Endothelial cell of umbilical vein (primary cell): ENCODE measurements at regions of chr16 and their contacts with region 1.

Region 1: GRCh38 chr16:19179546-19180490 is 11.8 kb downstream of the SYT17 start:
- DNase-seq: peak; percentile 63
- H3K4me3 ChIP-seq: no peak overlapping the region
- H3K27ac ChIP-seq: no peak overlapping the region
- H3K4me1 ChIP-seq: peaks cover 2% of the 10 kb centered on the region
- H3K27me3 ChIP-seq: peaks cover 0 to 6% of the 10 kb centered on the region in 2 experiments
- CTCF ChIP-seq: peak; percentile 73 to 87
- POLR2A ChIP-seq: no peak

Region 2: DNA sequence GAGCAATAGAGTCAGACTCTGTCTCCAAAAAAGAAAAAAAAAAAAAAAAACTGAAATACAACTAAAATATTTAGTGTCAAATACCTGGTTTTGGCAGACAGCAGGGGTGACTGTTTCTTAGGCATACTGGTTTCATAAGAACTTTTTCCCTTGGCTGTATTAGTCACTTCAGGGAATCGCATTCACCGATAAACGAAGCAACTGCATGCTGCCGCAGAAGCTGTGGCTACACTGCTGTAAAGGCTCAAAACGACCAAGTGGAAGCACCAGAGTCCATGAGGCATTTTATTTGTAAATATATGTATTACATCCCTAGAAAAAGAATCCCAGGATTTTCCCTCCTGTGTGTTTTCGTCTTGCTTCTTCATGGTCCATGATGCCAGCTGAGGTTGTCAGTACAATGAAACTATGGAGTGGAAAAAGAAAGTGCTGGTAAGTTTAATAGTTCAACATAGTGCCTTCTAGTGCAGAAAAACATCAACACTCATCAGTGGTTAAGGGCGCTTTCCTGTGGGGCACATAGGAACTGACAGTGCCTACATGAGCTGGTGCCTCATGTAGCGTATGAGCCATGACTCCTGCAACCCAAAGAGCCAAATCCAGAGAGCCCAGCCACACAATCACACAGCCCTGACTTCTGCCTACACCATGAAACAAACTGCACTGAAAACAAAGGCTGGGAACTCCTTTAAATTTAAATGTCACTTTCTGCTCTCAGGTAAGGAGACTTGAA is 397.0 kb before region 1 on chr16:
- CTCF ChIA-PET with region 1: no interaction called
- POLR2A ChIA-PET with region 1: no interaction called
- dilution Hi-C with region 1: no loop called
- intact Hi-C with region 1: no loop called
- DNase-seq: no peak
- H3K4me3 ChIP-seq: no peak overlapping the region
- H3K27ac ChIP-seq: no peak overlapping the region
- H3K4me1 ChIP-seq: peaks cover 24% of the 10 kb centered on the region
- H3K27me3 ChIP-seq: no peaks in the 10 kb centered on the region
- CTCF ChIP-seq: no peak
- POLR2A ChIP-seq: no peak

Region 3: GRCh38 chr16:19086322-19087199 is 93.3 kb before region 1 on chr16:
- CTCF ChIA-PET with region 1: interaction called, 244 read pairs
- POLR2A ChIA-PET with region 1: no interaction called
- dilution Hi-C with region 1: no loop called
- intact Hi-C with region 1: loop called (anchors 1 kb)
- DNase-seq: peak; percentile 95
- H3K4me3 ChIP-seq: peak overlapping the region; percentile 34 to 69 (median 41)
- H3K27ac ChIP-seq: peak overlapping the region; percentile 61
- H3K4me1 ChIP-seq: peaks cover 15% of the 10 kb centered on the region
- H3K27me3 ChIP-seq: no peaks in the 10 kb centered on the region
- CTCF ChIP-seq: peak; percentile 99
- POLR2A ChIP-seq: peak; percentile 94

Region 4: GRCh38 chr16:19094541-19095365 is 85.1 kb before region 1 on chr16:
- CTCF ChIA-PET with region 1: interaction called, 24 read pairs
- POLR2A ChIA-PET with region 1: no interaction called
- dilution Hi-C with region 1: no loop called
- intact Hi-C with region 1: no loop called
- DNase-seq: no peak
- H3K4me3 ChIP-seq: no peak overlapping the region
- H3K27ac ChIP-seq: no peak overlapping the region
- H3K4me1 ChIP-seq: peaks cover 17% of the 10 kb centered on the region
- H3K27me3 ChIP-seq: no peaks in the 10 kb centered on the region
- CTCF ChIP-seq: no peak
- POLR2A ChIP-seq: no peak

Region 5: DNA sequence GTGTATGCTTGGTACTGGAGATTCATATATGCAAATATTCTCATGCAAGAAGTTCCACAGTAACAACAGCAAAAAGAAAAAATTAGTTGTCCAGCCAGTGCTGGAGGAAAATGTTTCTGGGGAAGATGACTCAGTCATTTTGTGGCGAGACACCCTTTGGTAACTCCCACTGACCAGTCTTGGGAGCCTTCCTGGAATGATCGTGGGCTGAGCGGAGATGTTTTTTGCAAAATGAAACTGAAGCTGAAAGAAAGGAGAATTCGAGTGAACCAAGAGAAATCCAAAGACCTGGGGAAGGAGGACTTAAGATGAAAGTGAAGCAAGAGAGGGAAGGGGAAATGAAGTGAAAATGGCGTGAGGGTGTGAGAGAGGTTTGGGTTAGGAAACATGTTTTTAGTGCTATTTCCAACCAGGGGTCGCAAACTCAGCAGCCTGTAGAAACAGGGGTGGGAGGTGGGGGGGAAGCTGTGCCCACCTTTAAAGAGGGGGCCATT is 60.8 kb before region 1 on chr16:
- CTCF ChIA-PET with region 1: interaction called, 37 read pairs
- POLR2A ChIA-PET with region 1: no interaction called
- dilution Hi-C with region 1: no loop called
- intact Hi-C with region 1: loop called (anchors 5 kb)
- DNase-seq: peak; percentile 88
- H3K4me3 ChIP-seq: peak overlapping the region; percentile 6 to 49 (median 7)
- H3K27ac ChIP-seq: peak overlapping the region; percentile 85
- H3K4me1 ChIP-seq: peaks cover 49% of the 10 kb centered on the region
- H3K27me3 ChIP-seq: no peaks in the 10 kb centered on the region
- CTCF ChIP-seq: no peak
- POLR2A ChIP-seq: no peak

Region 6: DNA sequence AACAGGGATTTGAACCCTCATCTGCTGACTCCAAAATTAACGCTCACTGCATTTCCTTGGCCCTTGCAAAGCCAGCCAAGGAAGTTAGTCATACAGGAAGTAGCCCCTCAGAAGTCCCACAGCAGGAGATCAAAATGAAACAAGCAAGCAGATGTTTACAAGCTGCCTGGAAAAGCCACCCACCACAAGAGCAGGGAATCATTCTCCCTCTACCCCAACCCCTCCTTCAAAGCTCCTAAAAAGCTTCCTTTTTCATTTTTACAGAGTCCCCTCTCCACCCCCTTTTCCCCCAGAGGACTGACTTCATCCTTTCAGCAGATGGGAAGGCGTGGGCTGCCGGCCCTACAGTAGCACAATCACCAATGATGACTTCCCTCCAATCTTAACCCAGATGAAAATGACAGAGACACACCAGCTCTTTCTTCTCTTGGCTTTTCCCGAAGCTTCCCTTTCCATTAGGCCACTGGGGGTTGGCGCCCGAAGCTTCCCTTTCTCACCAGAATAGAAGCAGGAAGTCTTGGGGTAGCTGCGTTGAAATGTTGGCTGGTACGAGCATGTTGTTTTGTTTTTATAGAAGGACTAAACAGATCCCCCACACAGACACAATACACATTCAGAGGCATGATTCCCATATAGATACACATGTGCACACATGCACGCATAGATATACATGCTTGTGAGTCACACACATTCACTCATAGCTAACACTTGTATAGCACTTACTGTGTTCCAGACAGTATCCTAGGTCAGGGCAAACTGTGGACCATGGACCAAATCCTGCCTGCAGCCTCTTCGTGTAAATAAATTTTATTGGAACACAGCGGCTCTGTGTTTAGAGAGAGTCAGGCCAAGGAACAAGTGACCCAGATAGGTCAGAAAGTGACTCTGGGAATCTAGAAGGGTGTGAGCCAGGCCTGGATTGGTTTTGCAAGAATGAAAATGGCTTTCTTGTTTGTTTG is 48.7 kb before region 1 on chr16:
- CTCF ChIA-PET with region 1: interaction called, 17 read pairs
- POLR2A ChIA-PET with region 1: no interaction called
- dilution Hi-C with region 1: no loop called
- intact Hi-C with region 1: no loop called
- DNase-seq: peak; percentile 61
- H3K4me3 ChIP-seq: peak overlapping the region in 2 of 3 experiments; percentile 10 to 43
- H3K27ac ChIP-seq: peak overlapping the region; percentile 99
- H3K4me1 ChIP-seq: peaks cover 22% of the 10 kb centered on the region
- H3K27me3 ChIP-seq: no peaks in the 10 kb centered on the region
- CTCF ChIP-seq: no peak
- POLR2A ChIP-seq: no peak

Region 7: DNA sequence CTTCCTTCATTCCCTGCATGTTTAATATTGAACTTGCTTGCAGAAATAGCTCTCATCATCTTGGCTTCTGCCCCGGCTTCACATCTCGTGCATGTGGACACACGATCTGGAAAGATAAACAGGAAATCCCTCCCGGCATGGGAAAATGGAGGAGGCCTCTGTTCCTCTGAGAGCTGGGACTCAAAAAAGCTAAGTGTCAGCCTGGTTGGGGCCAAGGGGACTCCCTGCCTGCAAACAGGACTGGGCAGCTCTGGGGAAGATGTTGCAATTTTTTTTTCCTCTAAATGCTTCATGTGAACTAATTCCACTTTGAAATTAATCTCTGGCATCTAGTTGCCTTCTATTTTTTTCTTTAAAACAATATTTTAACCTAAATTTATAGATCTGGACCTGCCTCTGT is 41.2 kb before region 1 on chr16:
- CTCF ChIA-PET with region 1: interaction called, 19 read pairs
- POLR2A ChIA-PET with region 1: no interaction called
- dilution Hi-C with region 1: no loop called
- intact Hi-C with region 1: no loop called
- DNase-seq: peak; percentile 49
- H3K4me3 ChIP-seq: no peak overlapping the region
- H3K27ac ChIP-seq: no peak overlapping the region
- H3K4me1 ChIP-seq: peaks cover 4% of the 10 kb centered on the region
- H3K27me3 ChIP-seq: no peaks in the 10 kb centered on the region
- CTCF ChIP-seq: no peak
- POLR2A ChIP-seq: no peak

Region 8: GRCh38 chr16:19213890-19214289 is 34.1 kb after region 1 on chr16:
- CTCF ChIA-PET with region 1: no interaction called
- POLR2A ChIA-PET with region 1: no interaction called
- dilution Hi-C with region 1: no loop called
- intact Hi-C with region 1: no loop called
- DNase-seq: no peak
- H3K4me3 ChIP-seq: no peak overlapping the region
- H3K27ac ChIP-seq: no peak overlapping the region
- H3K4me1 ChIP-seq: no peaks in the 10 kb centered on the region
- H3K27me3 ChIP-seq: no peaks in the 10 kb centered on the region
- CTCF ChIP-seq: no peak
- POLR2A ChIP-seq: no peak